ENCODE measurements at regions of chr12 and their contacts with region 1.

Region 1: DNA sequence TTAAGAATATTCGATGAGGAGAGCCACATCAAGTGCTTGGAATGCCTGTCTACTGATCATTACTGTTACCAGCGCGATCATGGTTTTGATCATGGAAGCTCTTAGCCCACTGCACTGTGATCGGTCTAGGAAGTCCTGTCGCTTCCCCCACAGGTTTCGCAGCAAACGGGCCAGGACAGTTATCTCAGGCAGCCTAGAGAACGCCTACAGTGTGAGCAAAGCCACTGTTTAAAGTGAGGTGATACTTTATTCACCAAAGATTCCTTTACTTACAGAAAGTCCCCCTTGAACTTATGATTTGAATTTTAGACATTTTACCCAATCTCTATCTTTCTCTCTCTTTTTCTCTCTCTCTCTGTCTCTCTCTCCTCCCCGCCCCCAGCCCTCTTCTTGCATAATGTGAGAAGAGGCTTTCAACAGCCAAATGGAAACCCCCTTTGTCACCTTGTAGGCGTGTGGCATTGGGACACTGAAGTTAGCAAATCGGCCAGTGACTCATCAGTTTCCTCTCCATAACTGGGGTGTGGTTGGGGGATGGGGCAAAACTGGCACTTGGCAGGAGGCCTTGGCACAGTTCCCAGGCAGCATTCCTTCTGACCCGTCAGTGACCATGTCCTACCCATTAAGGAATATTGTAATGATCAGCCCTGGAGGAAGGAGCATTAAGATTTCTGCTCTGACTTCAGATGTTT is 214.8 kb downstream of the CHST11 start:
- DNase-seq: peak in 3 of 9 donors; percentile 30 to 80 (median 58)
- ATAC-seq: peak; percentile 80
- H3K4me3 ChIP-seq: no peak overlapping the region
- H3K4me3 Mint-ChIP-seq: peak overlapping the region in 7 of 10 donors; percentile 6 to 67 (median 21)
- H3K27ac ChIP-seq: no peak overlapping the region
- H3K27ac Mint-ChIP-seq: peak overlapping the region in 7 of 9 donors; percentile 11 to 92 (median 67)
- H3K4me1 ChIP-seq: peaks cover 25 to 36% of the 10 kb centered on the region in 2 donors
- H3K4me1 Mint-ChIP-seq: peaks cover 32 to 64% (median 48%) of the 10 kb centered on the region in 7 donors
- H3K27me3 ChIP-seq: no peaks in the 10 kb centered on the region
- H3K27me3 Mint-ChIP-seq: no peaks in the 10 kb centered on the region

Region 2: GRCh38 chr12:104686196-104686595 is 14.6 kb after region 1 on chr12:
- CTCF ChIA-PET with region 1: interaction called, 3 read pairs
- POLR2A ChIA-PET with region 1: no interaction called
- intact Hi-C with region 1: loop called (anchors 1 to 2 kb)
- DNase-seq: no peak
- ATAC-seq: no peak
- H3K4me3 ChIP-seq: no peak overlapping the region
- H3K4me3 Mint-ChIP-seq: peak overlapping the region in 1 of 10 donors; percentile 27
- H3K27ac ChIP-seq: no peak overlapping the region
- H3K27ac Mint-ChIP-seq: peak overlapping the region in 1 of 9 donors; percentile 96
- H3K4me1 ChIP-seq: peaks cover 31 to 69% of the 10 kb centered on the region in 2 donors
- H3K4me1 Mint-ChIP-seq: peaks cover 31 to 90% (median 62%) of the 10 kb centered on the region in 7 donors
- H3K27me3 ChIP-seq: no peaks in the 10 kb centered on the region
- H3K27me3 Mint-ChIP-seq: no peaks in the 10 kb centered on the region

Region 3: GRCh38 chr12:104699489-104700190 is 28.1 kb after region 1 on chr12:
- CTCF ChIA-PET with region 1: no interaction called
- POLR2A ChIA-PET with region 1: no interaction called
- intact Hi-C with region 1: no loop called
- DNase-seq: no peak
- ATAC-seq: no peak
- H3K4me3 ChIP-seq: no peak overlapping the region
- H3K4me3 Mint-ChIP-seq: no peak overlapping the region
- H3K27ac ChIP-seq: no peak overlapping the region
- H3K27ac Mint-ChIP-seq: peak overlapping the region in 1 of 9 donors; percentile 66
- H3K4me1 ChIP-seq: peaks cover 15 to 22% of the 10 kb centered on the region in 2 donors
- H3K4me1 Mint-ChIP-seq: peaks cover 27 to 61% (median 31%) of the 10 kb centered on the region in 7 donors
- H3K27me3 ChIP-seq: no peaks in the 10 kb centered on the region
- H3K27me3 Mint-ChIP-seq: no peaks in the 10 kb centered on the region